Endothelial cell of umbilical vein (primary cell): ENCODE measurements at regions of chr17 and their contacts with region 1.

Region 1: GRCh38 chr17:5592382-5592781 is 8.1 kb upstream of the NLRP1 start:
- DNase-seq: peak; percentile 55
- H3K4me3 ChIP-seq: no peak overlapping the region
- H3K27ac ChIP-seq: no peak overlapping the region
- H3K4me1 ChIP-seq: no peaks in the 10 kb centered on the region
- H3K27me3 ChIP-seq: peaks cover 0 to 5% of the 10 kb centered on the region in 2 experiments
- CTCF ChIP-seq: peak; percentile 33 to 38
- POLR2A ChIP-seq: no peak

Region 2: DNA sequence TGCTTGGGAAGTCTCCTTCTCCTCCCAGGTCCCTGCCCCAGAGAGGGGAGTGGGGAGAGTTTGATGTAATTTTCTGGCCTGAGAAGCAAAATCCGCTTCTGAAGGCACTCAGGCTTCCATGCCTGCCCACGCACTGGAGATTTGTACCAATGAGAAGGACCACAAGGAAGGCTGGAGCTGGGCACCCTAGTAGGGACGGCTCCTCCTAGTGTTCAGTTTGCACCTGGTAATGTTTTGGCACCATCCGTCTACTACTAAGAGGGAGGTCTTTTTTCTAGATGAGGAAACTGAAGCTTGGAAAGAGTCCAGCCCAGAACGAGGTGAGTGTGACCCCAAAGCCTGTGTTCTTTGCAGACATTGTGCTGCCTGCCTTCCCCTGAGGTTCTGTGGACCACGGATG is 75.5 kb after region 1 on chr17:
- CTCF ChIA-PET with region 1: interaction called, 24 read pairs
- POLR2A ChIA-PET with region 1: no interaction called
- dilution Hi-C with region 1: no loop called
- intact Hi-C with region 1: loop called (anchors 5 kb)
- DNase-seq: no peak
- H3K4me3 ChIP-seq: no peak overlapping the region
- H3K27ac ChIP-seq: no peak overlapping the region
- H3K4me1 ChIP-seq: peaks cover 3% of the 10 kb centered on the region
- H3K27me3 ChIP-seq: peaks cover 1 to 2% of the 10 kb centered on the region in 2 experiments
- CTCF ChIP-seq: peak; percentile 22 to 28
- POLR2A ChIP-seq: no peak

Region 3: DNA sequence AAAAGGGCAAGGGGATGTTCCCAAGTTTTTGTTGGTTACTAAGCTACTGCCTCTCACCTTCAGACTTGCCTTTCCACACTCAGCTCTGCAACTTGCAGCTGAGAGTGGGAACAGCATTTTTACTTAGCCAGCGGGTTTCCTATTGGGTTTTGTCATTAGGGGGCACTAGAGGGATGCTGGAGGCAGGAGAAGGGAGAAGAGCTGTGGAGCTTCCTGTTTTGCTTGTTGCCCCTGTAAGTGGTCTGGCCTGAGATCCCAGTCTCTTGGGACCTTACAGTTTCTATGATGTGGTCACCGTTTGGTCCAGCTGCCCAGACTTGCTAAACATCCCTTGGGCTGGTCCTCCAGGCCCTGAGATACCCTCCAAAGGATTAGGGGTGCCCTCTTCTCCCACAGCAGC is 201.5 kb after region 1 on chr17:
- CTCF ChIA-PET with region 1: interaction called, 10 read pairs
- POLR2A ChIA-PET with region 1: no interaction called
- dilution Hi-C with region 1: no loop called
- intact Hi-C with region 1: no loop called
- DNase-seq: peak; percentile 64
- H3K4me3 ChIP-seq: no peak overlapping the region
- H3K27ac ChIP-seq: no peak overlapping the region
- H3K4me1 ChIP-seq: no peaks in the 10 kb centered on the region
- H3K27me3 ChIP-seq: no peaks in the 10 kb centered on the region
- CTCF ChIP-seq: peak; percentile 26 to 43
- POLR2A ChIP-seq: no peak

Region 4: DNA sequence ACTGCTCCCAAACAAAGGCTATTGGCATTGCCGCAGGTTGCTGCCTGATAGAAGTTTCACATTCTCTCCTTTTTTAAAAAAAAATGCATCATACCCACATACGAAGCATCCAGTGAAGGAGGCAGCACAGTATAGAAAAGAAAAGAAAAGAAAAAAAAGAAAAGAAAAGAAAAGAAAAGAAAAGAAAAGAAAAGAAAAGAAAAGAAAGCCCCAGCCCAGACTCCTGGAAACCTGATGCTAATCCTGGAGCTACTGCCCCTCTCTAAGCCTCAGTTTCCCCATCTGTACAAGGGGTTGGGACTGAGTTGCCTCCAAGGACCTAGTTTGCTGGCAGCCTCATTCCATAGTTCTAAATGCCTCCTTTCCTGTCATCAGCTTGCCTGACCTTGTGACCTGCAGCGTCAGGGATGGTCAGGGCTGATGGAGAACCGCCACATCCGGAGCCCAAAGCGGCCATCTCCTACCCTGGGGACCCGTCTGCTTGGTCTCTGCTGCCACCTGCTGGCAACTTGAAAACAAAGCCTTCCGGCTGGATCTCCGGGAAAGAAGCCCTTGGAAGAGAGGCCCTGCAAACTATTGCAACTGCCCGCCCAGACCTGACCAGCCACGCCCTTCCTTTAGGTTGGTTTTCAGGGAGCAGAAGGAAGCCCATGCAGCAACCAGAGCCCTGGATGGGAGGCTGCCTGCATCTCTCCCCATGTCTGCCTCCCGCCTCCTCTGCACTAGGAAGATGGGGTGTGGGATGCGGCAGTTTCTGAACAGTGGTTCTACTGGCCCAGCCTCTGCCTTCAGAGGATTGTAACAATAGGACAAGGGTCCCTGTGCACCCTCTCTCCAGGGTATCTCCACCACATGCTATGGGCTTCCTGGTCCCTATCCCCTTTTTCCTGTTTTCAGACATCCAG is 829.6 kb after region 1 on chr17:
- CTCF ChIA-PET with region 1: interaction called, 93 read pairs
- POLR2A ChIA-PET with region 1: no interaction called
- dilution Hi-C with region 1: no loop called
- intact Hi-C with region 1: loop called (anchors 1 kb)
- DNase-seq: peak; percentile 51
- H3K4me3 ChIP-seq: no peak overlapping the region
- H3K27ac ChIP-seq: no peak overlapping the region
- H3K4me1 ChIP-seq: no peaks in the 10 kb centered on the region
- H3K27me3 ChIP-seq: no peaks in the 10 kb centered on the region
- CTCF ChIP-seq: peak; percentile 80 to 81
- POLR2A ChIP-seq: no peak

Region 5: GRCh38 chr17:6435968-6436367 is 843.6 kb after region 1 on chr17:
- CTCF ChIA-PET with region 1: interaction called, 35 read pairs
- POLR2A ChIA-PET with region 1: no interaction called
- dilution Hi-C with region 1: no loop called
- intact Hi-C with region 1: loop called (anchors 1 kb)
- DNase-seq: peak; percentile 51
- H3K4me3 ChIP-seq: no peak overlapping the region
- H3K27ac ChIP-seq: no peak overlapping the region
- H3K4me1 ChIP-seq: no peaks in the 10 kb centered on the region
- H3K27me3 ChIP-seq: peaks cover 4 to 20% of the 10 kb centered on the region in 2 experiments
- CTCF ChIP-seq: peak; percentile 76 to 79
- POLR2A ChIP-seq: no peak